Naive thymus-derived CD4-positive, alpha-beta T cell (primary cell): ENCODE measurements at regions of chr3 and their contacts with region 1.

Region 1: DNA sequence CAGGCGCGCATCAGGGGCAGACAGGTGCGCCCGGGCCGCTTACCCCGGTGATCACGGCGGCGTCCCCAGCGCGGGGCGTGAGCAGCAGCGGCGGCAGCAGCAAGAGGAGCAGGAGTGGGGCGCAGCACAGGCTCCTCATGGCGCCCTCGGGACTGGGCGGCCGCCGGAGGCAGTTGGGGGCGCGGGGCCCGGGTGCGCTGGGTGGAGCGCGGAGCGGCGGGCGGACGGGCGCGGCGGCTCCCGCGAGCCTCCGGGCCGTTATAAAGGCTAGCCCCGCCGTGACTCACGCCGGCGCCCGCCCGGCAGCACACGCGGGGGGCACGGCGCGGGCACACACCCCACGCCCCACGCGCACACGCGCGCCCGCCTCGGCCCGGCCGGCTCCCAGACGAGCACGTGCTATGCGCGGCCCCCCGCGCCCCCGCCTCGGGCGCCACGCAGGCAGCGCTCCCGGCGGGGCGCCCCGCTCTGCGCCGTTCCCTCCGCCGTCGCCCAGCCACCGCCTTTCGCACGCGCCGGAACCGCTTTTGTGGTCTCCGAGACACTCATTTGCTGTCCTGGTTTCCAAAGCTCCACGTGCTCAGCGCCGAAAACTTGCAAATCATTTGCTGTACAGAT is at the start of gene PROK2:
- DNase-seq: peak in 6 of 9 donors; percentile 11 to 38 (median 16)
- ATAC-seq: peak; percentile 77
- H3K4me3 ChIP-seq: peak within 1 kb of the TSS; percentile 13
- H3K4me3 Mint-ChIP-seq: peak within 1 kb of the TSS; percentile 75 to 89 (median 82)
- H3K27ac ChIP-seq: no peak within 1 kb of the TSS
- H3K27ac Mint-ChIP-seq: peak within 1 kb of the TSS in 1 of 9 donors; percentile 31
- H3K4me1 ChIP-seq: peaks cover 0 to 8% of the 10 kb centered on the region in 2 donors
- H3K4me1 Mint-ChIP-seq: peaks cover 16 to 22% (median 20%) of the 10 kb centered on the region in 7 donors
- H3K27me3 ChIP-seq: peaks cover 21 to 33% of the 10 kb centered on the region in 2 donors
- H3K27me3 Mint-ChIP-seq: peaks cover 51 to 78% (median 62%) of the 10 kb centered on the region in 5 donors
- total RNA-seq, gene PROK2: 14.1 TPM in 1 of 5 experiments, not detected in the others

Region 2: DNA sequence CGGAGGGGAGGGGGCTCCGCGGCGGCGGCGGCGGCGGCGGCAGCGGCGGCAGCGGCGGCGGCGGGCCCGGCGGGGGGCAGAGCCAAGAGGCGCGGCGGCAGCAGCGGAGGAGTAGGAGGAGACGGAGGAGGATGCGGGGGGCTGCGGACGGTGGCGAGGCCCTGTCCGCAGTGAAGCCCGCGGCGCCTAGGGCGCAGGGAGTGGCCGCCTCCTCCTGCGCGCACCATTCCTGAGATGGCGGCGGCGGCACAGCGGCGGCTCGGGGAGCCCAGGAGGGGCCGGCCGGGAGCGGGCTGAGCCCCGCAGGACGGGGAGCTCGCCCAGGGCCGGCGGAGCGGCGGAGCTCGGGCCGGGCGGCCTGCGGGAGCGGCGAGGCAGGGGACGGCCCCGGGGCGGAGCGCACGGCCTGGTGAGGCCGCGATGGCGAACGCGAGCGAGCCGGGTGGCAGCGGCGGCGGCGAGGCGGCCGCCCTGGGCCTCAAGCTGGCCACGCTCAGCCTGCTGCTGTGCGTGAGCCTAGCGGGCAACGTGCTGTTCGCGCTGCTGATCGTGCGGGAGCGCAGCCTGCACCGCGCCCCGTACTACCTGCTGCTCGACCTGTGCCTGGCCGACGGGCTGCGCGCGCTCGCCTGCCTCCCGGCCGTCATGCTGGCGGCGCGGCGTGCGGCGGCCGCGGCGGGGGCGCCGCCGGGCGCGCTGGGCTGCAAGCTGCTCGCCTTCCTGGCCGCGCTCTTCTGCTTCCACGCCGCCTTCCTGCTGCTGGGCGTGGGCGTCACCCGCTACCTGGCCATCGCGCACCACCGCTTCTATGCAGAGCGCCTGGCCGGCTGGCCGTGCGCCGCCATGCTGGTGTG is 31.2 kb before region 1 on chr3 and contains the start of gene GPR27:
- CTCF ChIA-PET with region 1: no interaction called
- POLR2A ChIA-PET with region 1: no interaction called
- intact Hi-C with region 1: loop called in 1 of 2 experiments (anchors 5 kb)
- DNase-seq: peak in 5 of 9 donors; percentile 16 to 42 (median 24)
- ATAC-seq: peak; percentile 65
- H3K4me3 ChIP-seq: peak within 1 kb of the TSS; percentile 38
- H3K4me3 Mint-ChIP-seq: peak within 1 kb of the TSS; percentile 29 to 90 (median 79)
- H3K27ac ChIP-seq: no peak within 1 kb of the TSS
- H3K27ac Mint-ChIP-seq: no peak within 1 kb of the TSS
- H3K4me1 ChIP-seq: peaks cover 0 to 5% of the 10 kb centered on the region in 2 donors
- H3K4me1 Mint-ChIP-seq: peaks cover 0 to 15% (median 13%) of the 10 kb centered on the region in 7 donors
- H3K27me3 ChIP-seq: peaks cover 0 to 6% of the 10 kb centered on the region in 2 donors
- H3K27me3 Mint-ChIP-seq: peaks cover 33 to 72% (median 40%) of the 10 kb centered on the region in 5 donors
- total RNA-seq, gene GPR27: 0.24 to 4.7 TPM in 2 of 5 experiments, not detected in the others

Region 3: DNA sequence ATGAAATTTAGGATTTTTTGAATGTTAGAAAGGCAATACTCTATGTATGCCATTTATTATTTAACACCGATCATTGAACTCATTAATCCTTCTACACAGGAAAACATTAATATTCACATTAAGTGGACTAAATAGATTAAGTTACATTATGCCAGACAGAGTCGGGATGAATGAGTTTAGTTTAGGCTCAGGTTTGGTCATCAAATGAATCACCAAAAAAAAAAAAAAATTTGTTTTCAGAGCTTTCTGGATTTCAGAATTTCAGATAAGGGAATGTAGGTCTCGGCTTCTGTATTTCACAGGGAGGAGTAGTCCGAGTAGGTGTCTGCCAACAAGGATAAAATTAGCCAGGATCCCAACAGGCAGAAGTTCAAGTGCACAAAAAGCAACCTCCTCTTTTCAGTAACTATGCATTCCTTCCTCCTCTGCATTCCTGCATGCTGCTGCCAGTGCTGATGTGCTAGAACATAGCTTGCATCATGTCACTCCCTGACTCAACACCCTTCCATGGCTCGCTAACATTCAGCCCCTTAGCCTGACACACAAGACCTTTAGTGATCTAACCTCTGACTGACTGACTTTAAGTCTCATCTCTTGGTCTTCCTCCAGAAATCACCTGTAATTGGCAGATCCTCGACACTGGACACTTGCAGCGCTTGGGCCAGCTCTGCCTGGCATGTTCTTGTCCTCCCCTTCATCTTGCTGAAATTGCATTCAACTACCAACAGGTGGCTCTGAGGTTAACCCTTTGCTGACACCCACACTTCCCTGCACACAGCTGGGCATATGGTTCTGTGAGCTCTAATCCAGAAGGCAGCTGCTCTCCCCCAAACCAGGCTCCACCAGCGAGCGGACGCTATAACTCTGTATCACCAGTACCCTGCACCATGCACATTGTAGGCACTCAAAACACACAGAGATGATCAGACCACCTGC is 145.3 kb after region 1 on chr3:
- CTCF ChIA-PET with region 1: no interaction called
- POLR2A ChIA-PET with region 1: no interaction called
- intact Hi-C with region 1: no loop called
- DNase-seq: peak in 3 of 9 donors; percentile 4 to 13 (median 12)
- ATAC-seq: no peak
- H3K4me3 ChIP-seq: no peak overlapping the region
- H3K4me3 Mint-ChIP-seq: no peak overlapping the region
- H3K27ac ChIP-seq: no peak overlapping the region
- H3K27ac Mint-ChIP-seq: no peak overlapping the region
- H3K4me1 ChIP-seq: no peaks in the 10 kb centered on the region
- H3K4me1 Mint-ChIP-seq: peaks cover 0 to 5% (median 0%) of the 10 kb centered on the region in 7 donors
- H3K27me3 ChIP-seq: no peaks in the 10 kb centered on the region
- H3K27me3 Mint-ChIP-seq: peaks cover 0 to 10% (median 0%) of the 10 kb centered on the region in 5 donors

Region 4: GRCh38 chr3:71955240-71956068 is 170.4 kb after region 1 on chr3:
- CTCF ChIA-PET with region 1: no interaction called
- POLR2A ChIA-PET with region 1: no interaction called
- intact Hi-C with region 1: no loop called
- DNase-seq: peak in 3 of 9 donors; percentile 5 to 27 (median 17)
- ATAC-seq: no peak
- H3K4me3 ChIP-seq: no peak overlapping the region
- H3K4me3 Mint-ChIP-seq: no peak overlapping the region
- H3K27ac ChIP-seq: no peak overlapping the region
- H3K27ac Mint-ChIP-seq: peak overlapping the region in 1 of 9 donors; percentile 28
- H3K4me1 ChIP-seq: no peaks in the 10 kb centered on the region
- H3K4me1 Mint-ChIP-seq: peaks cover 0 to 43% (median 13%) of the 10 kb centered on the region in 7 donors
- H3K27me3 ChIP-seq: no peaks in the 10 kb centered on the region
- H3K27me3 Mint-ChIP-seq: no peaks in the 10 kb centered on the region